ENCODE measurements at regions of chr11 and their contacts with region 1.

Region 1: GRCh38 chr11:105282658-105283057 is 143.1 kb upstream of the CARD18 start:
- DNase-seq: no peak
- H3K4me3 ChIP-seq: no peak overlapping the region
- H3K27me3 ChIP-seq: no peaks in the 10 kb centered on the region
- CTCF ChIP-seq: no peak

Region 2: DNA sequence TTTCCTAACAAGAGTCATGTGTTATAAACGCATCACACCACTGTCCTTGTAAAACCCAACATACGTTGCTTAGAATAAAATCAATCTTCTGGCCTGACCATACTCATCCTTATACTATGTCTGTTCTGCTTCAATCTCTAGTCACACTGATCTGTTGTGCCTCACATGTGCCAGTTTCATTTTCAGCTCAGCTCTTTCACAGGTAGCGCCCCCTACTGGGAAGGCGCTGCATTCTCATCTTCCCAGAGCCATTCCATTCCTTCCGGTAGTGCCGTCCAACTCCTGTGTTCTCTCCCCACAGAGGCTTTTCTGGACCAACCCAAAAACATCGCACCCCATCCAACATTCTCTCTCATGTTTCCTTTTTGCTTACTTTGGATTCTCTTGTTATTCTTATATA is 281.9 kb before region 1 on chr11:
- CTCF ChIA-PET with region 1: no interaction called
- POLR2A ChIA-PET with region 1: interaction called, 11 read pairs
- DNase-seq: no peak
- H3K4me3 ChIP-seq: no peak overlapping the region
- H3K27me3 ChIP-seq: no peaks in the 10 kb centered on the region
- CTCF ChIP-seq: peak; percentile 42; the same call in 1 of the 2 replicates

Region 3: DNA sequence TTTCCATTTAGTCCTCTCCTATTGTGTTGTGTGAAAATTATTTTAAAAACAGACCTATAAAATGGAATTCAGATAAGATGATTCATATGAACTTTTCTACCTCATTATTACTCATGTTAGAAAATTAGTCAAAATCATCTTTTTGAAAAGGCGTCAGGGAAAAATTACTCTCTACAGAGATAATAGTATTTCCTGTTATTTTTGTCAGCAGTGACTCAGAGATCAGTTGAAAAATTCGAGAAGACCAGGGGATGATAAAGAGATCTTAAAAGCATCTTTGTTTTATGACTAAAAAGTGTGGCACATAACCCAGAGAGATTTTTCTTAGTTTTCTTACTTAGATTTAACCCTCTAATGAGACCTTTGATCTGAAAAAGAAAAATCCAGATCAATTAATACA is 14.8 kb after region 1 on chr11:
- CTCF ChIA-PET with region 1: no interaction called
- POLR2A ChIA-PET with region 1: no interaction called
- DNase-seq: peak; percentile 33
- H3K4me3 ChIP-seq: no peak overlapping the region
- H3K27me3 ChIP-seq: no peaks in the 10 kb centered on the region
- CTCF ChIP-seq: no peak